Activated naive CD4-positive, alpha-beta T cell treated with anti-CD3 and anti-CD28 coated beads for 36 hours (primary cell): ENCODE measurements at regions of chr10 and their contacts with region 1.

Region 1: GRCh38 chr10:35328404-35329037 is 7.8 kb upstream of the CCNY start:
- DNase-seq: no peak
- H3K4me3 Mint-ChIP-seq: no peak overlapping the region
- H3K27ac Mint-ChIP-seq: peak overlapping the region; percentile 26
- H3K4me1 Mint-ChIP-seq: peaks cover 46% of the 10 kb centered on the region
- H3K27me3 Mint-ChIP-seq: no peaks in the 10 kb centered on the region

Region 2: DNA sequence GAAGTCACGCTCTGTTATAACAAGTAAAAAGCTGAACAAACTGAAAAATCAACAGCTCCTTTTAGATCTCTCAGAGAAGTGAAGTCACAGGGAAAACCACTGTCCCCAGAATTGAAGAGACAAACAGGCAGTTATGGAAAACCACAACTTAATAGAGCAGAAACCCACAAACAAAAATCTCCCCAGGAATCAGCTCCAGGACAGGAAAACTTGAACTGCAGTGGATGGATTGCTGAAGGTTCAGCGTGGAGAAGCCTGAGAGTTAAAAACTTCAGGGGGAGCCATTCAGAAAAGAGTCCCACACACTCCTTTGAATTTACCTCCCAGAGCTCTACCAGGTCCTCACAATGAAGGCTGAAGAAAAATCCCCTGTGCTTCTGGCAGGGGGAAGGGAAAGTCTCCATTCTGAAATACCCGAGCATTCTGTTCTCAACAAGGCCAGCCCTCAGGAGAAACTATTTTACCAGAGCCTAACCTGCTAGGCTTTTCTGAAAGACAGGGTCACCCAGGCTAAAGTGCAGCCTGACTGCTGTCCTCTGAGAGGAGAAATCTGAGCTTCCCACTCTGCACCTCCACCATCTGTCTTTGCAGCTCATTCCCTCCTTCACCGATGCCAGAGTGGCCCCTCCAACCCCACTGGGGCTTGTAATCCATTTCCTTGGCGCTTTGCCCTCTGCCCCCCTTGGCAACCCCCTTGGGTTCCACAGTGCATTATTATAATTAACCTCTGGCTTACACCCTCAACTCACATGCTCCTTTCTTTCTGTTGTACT is 57.2 kb before region 1 on chr10:
- CTCF ChIA-PET with region 1: interaction called, 3 read pairs
- intact Hi-C with region 1: loop called (anchors 5 kb)
- DNase-seq: no peak
- H3K4me3 Mint-ChIP-seq: no peak overlapping the region
- H3K27ac Mint-ChIP-seq: no peak overlapping the region
- H3K4me1 Mint-ChIP-seq: peaks cover 17% of the 10 kb centered on the region
- H3K27me3 Mint-ChIP-seq: peaks cover 3% of the 10 kb centered on the region